Breast epithelium (tissue), 4 donors: ENCODE measurements at regions of chr1 and their contacts with region 1.

Region 1: DNA sequence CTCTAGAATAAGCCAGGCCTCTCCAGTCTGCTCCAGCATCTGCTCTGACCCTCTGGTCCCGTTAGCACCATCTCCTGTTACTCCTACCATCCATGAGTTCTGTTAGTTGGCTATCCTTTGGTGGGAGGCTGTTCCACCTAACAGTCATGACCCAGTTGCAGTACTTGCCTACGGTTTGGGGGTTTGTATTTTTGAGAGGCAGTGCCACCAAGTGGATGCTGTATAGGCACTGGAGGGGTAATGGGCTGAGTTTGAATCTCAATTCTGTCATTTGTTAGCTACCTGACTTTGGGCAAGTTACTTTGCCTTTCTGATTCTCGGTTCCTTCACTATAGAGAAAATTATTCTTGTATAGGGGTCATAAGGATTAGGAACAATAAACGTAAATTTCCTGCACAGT is 12.1 kb upstream of the C8B start:
- DNase-seq: no peak
- H3K4me3 ChIP-seq: no peak overlapping the region
- H3K27ac ChIP-seq: no peak overlapping the region
- H3K4me1 ChIP-seq: no peaks in the 10 kb centered on the region
- H3K27me3 ChIP-seq: no peaks in the 10 kb centered on the region
- CTCF ChIP-seq: no peak
- POLR2A ChIP-seq: no peak

Region 2: GRCh38 chr1:56948403-56949023 is 29.4 kb before region 1 on chr1:
- intact Hi-C with region 1: loop called (anchors 2 kb)
- DNase-seq: no peak
- H3K4me3 ChIP-seq: no peak overlapping the region
- H3K27ac ChIP-seq: no peak overlapping the region
- H3K4me1 ChIP-seq: no peaks in the 10 kb centered on the region
- H3K27me3 ChIP-seq: no peaks in the 10 kb centered on the region
- CTCF ChIP-seq: no peak
- POLR2A ChIP-seq: no peak